Activated B cell treated with CpG ODN at 0.5 μM for 24 hours (primary cell): ENCODE measurements at regions of chr19 and their contacts with region 1.

Region 1: GRCh38 chr19:18985257-18985656 is 44.2 kb upstream of the HOMER3 start:
- DNase-seq: no peak
- ATAC-seq: no peak
- H3K4me3 Mint-ChIP-seq: no peak overlapping the region
- H3K27ac Mint-ChIP-seq: no peak overlapping the region
- H3K4me1 Mint-ChIP-seq: peaks cover 9% of the 10 kb centered on the region
- H3K27me3 Mint-ChIP-seq: peaks cover 4% of the 10 kb centered on the region
- CTCF ChIP-seq: no peak

Region 2: DNA sequence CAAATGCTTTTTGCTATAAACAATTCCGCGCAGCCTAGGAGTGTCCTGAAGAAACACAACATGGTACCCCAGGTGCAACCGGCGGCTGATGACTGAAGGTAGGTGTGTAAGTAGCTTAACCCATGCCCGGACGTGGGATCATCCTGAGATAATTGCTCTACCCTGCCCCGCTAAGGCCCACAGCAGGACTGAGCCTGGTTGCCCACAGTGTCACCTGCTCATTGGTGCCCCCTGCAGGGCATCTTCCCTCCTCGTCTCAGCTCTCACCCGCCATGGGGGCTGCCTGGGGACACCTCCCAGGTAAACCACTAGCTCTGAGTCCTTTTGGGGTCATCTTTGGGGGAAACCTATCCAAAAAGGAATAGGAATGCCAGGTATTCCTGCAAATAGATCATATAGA is 130.7 kb after region 1 on chr19:
- CTCF ChIA-PET with region 1: no interaction called
- POLR2A ChIA-PET with region 1: no interaction called
- intact Hi-C with region 1: no loop called
- DNase-seq: peak; percentile 38
- ATAC-seq: peak; percentile 56
- H3K4me3 Mint-ChIP-seq: no peak overlapping the region
- H3K27ac Mint-ChIP-seq: no peak overlapping the region
- H3K4me1 Mint-ChIP-seq: peaks cover 13% of the 10 kb centered on the region
- H3K27me3 Mint-ChIP-seq: no peaks in the 10 kb centered on the region
- CTCF ChIP-seq: no peak

Region 3: DNA sequence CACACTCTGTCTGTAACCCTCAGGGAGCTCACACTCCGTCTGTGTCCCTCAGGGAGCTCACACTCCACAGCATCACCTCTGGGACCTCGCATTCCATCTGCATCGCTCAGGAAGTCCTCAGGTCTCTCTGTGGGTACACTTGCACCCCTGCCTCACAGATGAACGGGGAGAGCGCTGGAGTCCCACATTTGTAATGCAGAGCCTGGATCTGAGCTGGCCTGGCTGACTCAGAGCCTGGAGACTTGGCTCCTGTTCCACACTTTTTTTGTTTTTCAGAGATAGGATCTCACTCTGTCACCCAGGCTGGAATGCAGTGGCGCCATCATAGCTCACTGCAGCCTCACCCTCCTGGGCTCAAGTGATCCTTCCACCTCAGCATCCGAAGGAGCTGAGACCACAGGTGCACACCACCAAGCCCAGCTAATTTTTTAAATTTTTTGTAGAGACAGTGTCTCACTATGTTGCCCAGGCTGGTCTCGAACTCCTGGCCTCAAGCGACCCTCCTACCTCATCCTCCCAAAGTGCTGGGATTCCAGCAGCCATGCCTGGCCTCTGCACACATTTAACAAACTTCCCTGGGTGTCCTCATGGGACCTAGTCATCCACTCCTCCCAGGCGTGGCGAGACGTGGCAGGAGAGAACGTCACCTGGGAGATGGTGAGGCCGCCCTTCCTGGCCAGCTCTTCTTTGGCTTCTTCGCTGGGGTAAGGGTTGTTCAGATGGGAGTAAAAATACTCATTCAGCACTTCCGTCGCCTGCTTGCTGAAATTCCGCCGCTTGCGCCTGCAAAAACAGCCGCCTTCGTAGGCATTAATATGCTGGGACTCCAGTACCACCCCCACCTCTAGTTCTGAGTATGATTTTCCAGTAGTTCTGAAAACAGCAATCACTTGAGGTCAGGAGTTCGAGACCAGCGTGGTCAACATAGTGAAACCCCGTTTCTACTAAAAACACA is 583.8 kb after region 1 on chr19:
- CTCF ChIA-PET with region 1: no interaction called
- POLR2A ChIA-PET with region 1: interaction called, 16 read pairs
- intact Hi-C with region 1: no loop called
- DNase-seq: no peak
- ATAC-seq: no peak
- H3K4me3 Mint-ChIP-seq: no peak overlapping the region
- H3K27ac Mint-ChIP-seq: no peak overlapping the region
- H3K4me1 Mint-ChIP-seq: no peaks in the 10 kb centered on the region
- H3K27me3 Mint-ChIP-seq: no peaks in the 10 kb centered on the region
- CTCF ChIP-seq: no peak